Astrocyte of the cerebellum (primary cell): ENCODE measurements at regions of chr13 and their contacts with region 1.

Region 1: GRCh38 chr13:74133657-74134201 is 475 bp downstream of the KLF12 start:
- DNase-seq: peak; percentile 92
- H3K4me3 ChIP-seq: peak overlapping the region; percentile 70
- CTCF ChIP-seq: no peak

Region 2: GRCh38 chr13:73355134-73355533 is 778.6 kb before region 1 on chr13:
- in situ Hi-C with region 1: no loop called
- DNase-seq: no peak
- H3K4me3 ChIP-seq: no peak overlapping the region
- CTCF ChIP-seq: no peak

Region 3: DNA sequence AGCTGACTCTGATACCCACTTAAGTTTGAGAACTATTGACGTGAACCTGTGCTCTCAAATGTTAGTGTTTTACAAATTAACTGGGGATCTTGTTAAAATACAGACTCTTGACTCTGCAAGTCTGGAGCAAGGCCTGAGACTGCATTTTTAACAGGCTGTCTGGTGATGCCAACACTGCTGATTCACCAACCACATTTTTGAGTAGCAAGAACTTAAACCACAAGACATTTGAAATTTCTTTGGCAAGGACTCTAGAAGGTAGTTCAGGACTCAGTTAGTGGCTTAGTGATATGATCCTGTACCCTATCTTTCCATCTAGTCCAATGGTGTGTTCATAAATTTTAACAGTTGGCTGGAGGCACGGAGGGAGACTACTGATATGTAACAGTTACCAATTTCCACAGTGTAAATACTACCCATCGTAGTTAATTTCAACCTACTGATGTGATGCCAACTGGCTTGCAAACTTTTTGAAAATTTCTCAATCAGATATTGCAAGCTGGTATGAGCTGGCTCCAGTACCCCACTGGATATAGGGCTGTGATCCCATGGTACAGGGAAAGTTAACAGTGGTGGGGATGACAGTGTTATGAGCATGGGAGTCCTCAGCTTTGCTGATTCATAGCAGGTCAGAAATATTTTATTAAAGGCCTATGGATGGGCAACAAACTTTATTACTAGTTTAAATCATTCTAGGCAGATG is 1093.2 kb after region 1 on chr13:
- in situ Hi-C with region 1: loop called (anchors 25 kb)
- DNase-seq: peak; percentile 94
- H3K4me3 ChIP-seq: no peak overlapping the region
- CTCF ChIP-seq: no peak